ENCODE measurements at regions of chr6 and their contacts with region 1.

Region 1: GRCh38 chr6:136304410-136304809 is 14.8 kb upstream of the BCLAF1 start:
- DNase-seq: no peak
- ATAC-seq: no peak
- H3K4me3 Mint-ChIP-seq: no peak overlapping the region
- H3K27ac Mint-ChIP-seq: no peak overlapping the region
- H3K4me1 Mint-ChIP-seq: no peaks in the 10 kb centered on the region
- H3K27me3 Mint-ChIP-seq: no peaks in the 10 kb centered on the region
- CTCF ChIP-seq: no peak

Region 2: GRCh38 chr6:135759831-135760230 is 544.6 kb before region 1 on chr6:
- CTCF ChIA-PET with region 1: no interaction called
- POLR2A ChIA-PET with region 1: no interaction called
- intact Hi-C with region 1: no loop called
- DNase-seq: no peak
- ATAC-seq: no peak
- H3K4me3 Mint-ChIP-seq: no peak overlapping the region
- H3K27ac Mint-ChIP-seq: no peak overlapping the region
- H3K4me1 Mint-ChIP-seq: no peaks in the 10 kb centered on the region
- H3K27me3 Mint-ChIP-seq: peaks cover 2% of the 10 kb centered on the region
- CTCF ChIP-seq: no peak

Region 3: DNA sequence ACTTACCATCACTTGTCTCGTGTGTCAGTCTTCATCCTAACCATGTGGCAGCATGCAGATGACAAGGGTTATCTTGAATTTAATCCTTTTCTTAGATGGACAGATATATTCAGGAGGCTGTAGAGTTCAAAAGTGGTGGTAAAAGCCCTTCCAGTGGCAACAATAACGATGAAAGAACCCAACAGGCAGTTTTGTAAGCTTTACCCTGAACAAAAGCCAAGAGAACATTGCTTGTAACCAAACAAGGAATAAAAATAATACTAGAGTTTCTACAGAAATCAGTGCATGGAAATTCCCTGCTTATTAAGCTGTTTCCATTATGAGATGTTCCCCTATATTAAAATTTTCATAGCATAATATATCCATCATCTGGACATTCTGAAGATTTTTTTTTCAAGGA is 383.2 kb before region 1 on chr6:
- CTCF ChIA-PET with region 1: no interaction called
- POLR2A ChIA-PET with region 1: no interaction called
- intact Hi-C with region 1: no loop called
- DNase-seq: no peak
- ATAC-seq: no peak
- H3K4me3 Mint-ChIP-seq: no peak overlapping the region
- H3K27ac Mint-ChIP-seq: no peak overlapping the region
- H3K4me1 Mint-ChIP-seq: peaks cover 2% of the 10 kb centered on the region
- H3K27me3 Mint-ChIP-seq: no peaks in the 10 kb centered on the region
- CTCF ChIP-seq: no peak

Region 4: GRCh38 chr6:136210398-136211165 is 93.8 kb before region 1 on chr6:
- CTCF ChIA-PET with region 1: no interaction called
- POLR2A ChIA-PET with region 1: interaction called, 15 read pairs
- intact Hi-C with region 1: no loop called
- DNase-seq: no peak
- ATAC-seq: no peak
- H3K4me3 Mint-ChIP-seq: no peak overlapping the region
- H3K27ac Mint-ChIP-seq: no peak overlapping the region
- H3K4me1 Mint-ChIP-seq: no peaks in the 10 kb centered on the region
- H3K27me3 Mint-ChIP-seq: no peaks in the 10 kb centered on the region
- CTCF ChIP-seq: no peak

Region 5: DNA sequence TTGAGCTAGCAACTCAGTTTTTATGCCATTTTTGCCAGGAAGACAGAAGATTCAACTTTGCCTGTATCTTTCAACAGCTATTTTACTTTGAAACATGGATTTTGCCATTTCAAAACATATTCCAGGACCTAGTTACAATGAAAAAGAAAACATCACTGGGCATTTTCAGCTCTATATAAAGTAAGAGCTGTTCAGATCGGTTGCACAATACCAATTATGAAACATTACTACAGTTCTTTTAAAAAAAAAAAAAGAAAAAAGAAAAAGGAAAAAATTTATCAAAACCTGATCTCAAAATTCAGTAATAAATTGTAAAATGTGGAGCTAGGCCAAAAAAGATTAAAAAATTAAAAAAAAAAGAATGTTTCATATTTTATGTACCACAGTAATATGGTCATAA is 30.3 kb before region 1 on chr6:
- CTCF ChIA-PET with region 1: no interaction called
- POLR2A ChIA-PET with region 1: no interaction called
- intact Hi-C with region 1: no loop called
- DNase-seq: no peak
- ATAC-seq: no peak
- H3K4me3 Mint-ChIP-seq: no peak overlapping the region
- H3K27ac Mint-ChIP-seq: no peak overlapping the region
- H3K4me1 Mint-ChIP-seq: peaks cover 2% of the 10 kb centered on the region
- H3K27me3 Mint-ChIP-seq: no peaks in the 10 kb centered on the region
- CTCF ChIP-seq: no peak

Region 6: GRCh38 chr6:136334853-136335252 is 30.4 kb after region 1 on chr6:
- CTCF ChIA-PET with region 1: no interaction called
- POLR2A ChIA-PET with region 1: no interaction called
- intact Hi-C with region 1: no loop called
- DNase-seq: no peak
- ATAC-seq: no peak
- H3K4me3 Mint-ChIP-seq: no peak overlapping the region
- H3K27ac Mint-ChIP-seq: no peak overlapping the region
- H3K4me1 Mint-ChIP-seq: no peaks in the 10 kb centered on the region
- H3K27me3 Mint-ChIP-seq: peaks cover 2% of the 10 kb centered on the region
- CTCF ChIP-seq: no peak

Measured in activated B cell treated with CpG ODN at 0.5 μM for 24 hours (primary cell).